Panc1 (cell line): ENCODE measurements at regions of chrX and their contacts with region 1.

Region 1: GRCh38 chrX:40773809-40774208 is 38.5 kb upstream of the MED14 start:
- DNase-seq: no peak
- ATAC-seq: peak; percentile 87
- H3K4me3 ChIP-seq: no peak overlapping the region
- H3K27ac ChIP-seq: 0 out of 2 replicates have a peak overlapping the region, but pooled peaks have one; percentile 17
- H3K4me1 ChIP-seq: peaks cover 5% of the 10 kb centered on the region
- H3K27me3 ChIP-seq: no peaks in the 10 kb centered on the region
- CTCF ChIP-seq: no peak

Region 2: DNA sequence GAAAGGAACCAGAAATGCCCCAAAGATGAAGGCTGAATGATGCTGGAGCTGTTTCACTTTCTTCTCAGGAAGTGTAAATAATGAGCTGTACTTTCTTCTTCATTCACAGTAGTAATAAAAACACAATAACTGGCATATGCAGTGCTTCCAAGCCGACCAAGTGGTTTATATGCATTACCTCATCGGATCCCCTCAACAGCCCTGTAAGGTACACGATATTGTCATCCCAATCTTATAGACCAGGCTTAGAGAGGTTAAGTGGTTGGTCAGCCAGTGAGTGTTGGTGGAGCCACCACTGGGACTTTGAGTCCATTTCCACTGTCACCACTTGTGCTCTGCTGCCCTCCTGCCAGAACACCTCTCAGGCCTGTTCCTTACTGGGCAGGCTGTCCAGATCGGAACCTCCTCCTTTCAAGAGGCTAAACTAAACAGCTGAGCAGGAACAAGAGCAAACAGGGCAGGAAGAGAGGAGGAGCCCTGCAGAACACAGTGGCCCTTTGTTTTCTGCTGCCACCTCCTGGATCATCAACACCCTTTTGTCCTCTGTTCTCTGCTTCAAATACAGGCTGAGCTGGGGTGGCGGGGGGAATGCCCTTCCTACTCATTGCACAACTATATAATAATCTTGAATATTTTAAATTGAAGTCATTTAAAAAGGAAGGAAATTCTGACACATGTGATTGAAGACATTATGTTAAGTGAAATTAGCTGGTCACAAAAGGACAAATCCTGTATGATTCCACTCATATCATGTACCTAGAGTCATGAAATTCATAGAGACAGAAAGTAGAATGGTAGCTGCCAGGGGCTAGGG is 305.6 kb before region 1 on chrX:
- CTCF ChIA-PET with region 1: no interaction called
- POLR2A ChIA-PET with region 1: no interaction called
- in situ Hi-C with region 1: no loop called
- intact Hi-C with region 1: no loop called
- DNase-seq: peak; percentile 2
- ATAC-seq: peak; percentile 89
- H3K4me3 ChIP-seq: no peak overlapping the region
- H3K27ac ChIP-seq: no peak overlapping the region
- H3K4me1 ChIP-seq: no peaks in the 10 kb centered on the region
- H3K27me3 ChIP-seq: no peaks in the 10 kb centered on the region
- CTCF ChIP-seq: peak; percentile 57

Region 3: GRCh38 chrX:40755291-40756249 is 18.2 kb before region 1 on chrX:
- CTCF ChIA-PET with region 1: no interaction called
- POLR2A ChIA-PET with region 1: no interaction called
- in situ Hi-C with region 1: no loop called
- intact Hi-C with region 1: no loop called
- DNase-seq: no peak
- ATAC-seq: no peak
- H3K4me3 ChIP-seq: no peak overlapping the region
- H3K27ac ChIP-seq: no peak overlapping the region
- H3K4me1 ChIP-seq: no peaks in the 10 kb centered on the region
- H3K27me3 ChIP-seq: no peaks in the 10 kb centered on the region
- CTCF ChIP-seq: no peak

Region 4: DNA sequence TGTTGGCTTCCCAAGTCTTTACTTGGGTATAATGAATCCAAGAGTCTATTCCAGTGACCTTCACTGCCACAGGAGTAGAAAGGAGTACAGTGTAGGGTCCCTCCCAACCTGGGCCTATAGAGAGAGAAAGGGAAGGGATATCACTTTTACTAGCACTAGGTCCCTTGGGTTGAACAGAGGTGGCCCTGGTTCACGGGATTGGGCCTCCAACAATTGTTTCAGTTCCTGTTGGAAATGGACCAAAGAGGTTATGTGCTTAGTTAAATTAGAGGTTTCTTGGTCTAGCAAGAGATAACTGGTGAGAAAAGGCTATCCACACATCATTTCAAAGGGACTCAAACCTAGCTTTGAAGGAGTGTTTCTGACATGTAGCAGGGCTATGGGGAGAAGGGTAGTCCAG is 18.6 kb after region 1 on chrX:
- CTCF ChIA-PET with region 1: interaction called, 12 read pairs
- POLR2A ChIA-PET with region 1: no interaction called
- in situ Hi-C with region 1: no loop called
- intact Hi-C with region 1: no loop called
- DNase-seq: no peak
- ATAC-seq: no peak
- H3K4me3 ChIP-seq: no peak overlapping the region
- H3K27ac ChIP-seq: no peak overlapping the region
- H3K4me1 ChIP-seq: no peaks in the 10 kb centered on the region
- H3K27me3 ChIP-seq: no peaks in the 10 kb centered on the region
- CTCF ChIP-seq: no peak